WTC11 (cell line): ENCODE measurements at regions of chr11 and their contacts with region 1.

Region 1: DNA sequence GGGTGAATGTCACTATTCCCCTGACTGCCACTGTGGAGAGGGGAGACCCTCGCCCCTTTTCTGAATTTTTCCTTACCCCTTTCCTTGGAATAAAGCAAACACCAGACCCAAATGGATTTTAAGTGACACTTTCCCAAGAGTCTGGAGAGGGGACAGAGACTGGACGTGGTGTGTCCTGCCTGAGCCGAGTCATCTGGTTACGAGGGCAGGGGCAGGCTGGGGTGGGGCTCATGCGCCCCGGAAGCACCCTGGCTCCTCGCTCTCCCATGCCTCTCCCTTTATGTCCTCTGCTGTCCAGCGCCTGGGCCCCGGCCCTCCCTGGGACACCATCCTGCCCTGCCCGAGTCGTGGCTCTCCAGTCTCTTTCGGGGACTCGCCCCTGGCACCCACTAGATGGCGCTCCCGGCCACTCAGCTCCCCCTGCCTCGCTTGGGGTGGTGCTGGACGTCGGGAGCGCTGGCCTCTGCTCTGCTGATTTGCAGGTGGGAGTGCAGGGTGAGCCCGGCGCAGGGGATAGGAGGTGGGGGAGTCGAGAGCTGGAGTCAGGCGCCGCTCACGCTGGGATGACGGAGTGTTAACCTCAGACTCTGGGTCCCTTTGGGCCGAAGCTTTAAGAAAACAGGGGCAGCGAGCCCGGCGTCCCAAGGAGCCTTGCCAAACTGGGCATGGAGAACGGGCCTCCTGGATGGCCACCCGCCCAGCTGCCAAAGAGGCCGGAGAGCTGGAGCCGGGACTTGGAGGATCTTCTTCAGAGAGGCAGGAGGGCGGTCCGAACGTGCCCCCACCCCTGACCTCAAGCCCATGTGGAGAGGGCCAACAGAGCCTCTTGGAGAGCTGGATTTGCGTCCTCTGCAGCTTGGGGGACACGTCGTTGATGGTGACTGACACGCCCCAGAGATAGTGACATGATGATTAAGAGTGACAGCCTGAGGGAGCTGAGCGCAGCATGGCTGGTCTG is 89.9 kb downstream of the RPS6KA4 start:
- DNase-seq: peak; percentile 92
- ATAC-seq: peak; percentile 83
- H3K4me3 Mint-ChIP-seq: peak overlapping the region; percentile 76
- H3K27ac Mint-ChIP-seq: no peak overlapping the region
- H3K4me1 Mint-ChIP-seq: peaks cover 18% of the 10 kb centered on the region
- H3K27me3 Mint-ChIP-seq: peaks cover 68% of the 10 kb centered on the region
- CTCF ChIP-seq: peak; percentile 69

Region 2: GRCh38 chr11:64317957-64318693 is 130.8 kb before region 1 on chr11 and contains the start of gene PRDX5:
- CTCF ChIA-PET with region 1: interaction called, 18 read pairs
- POLR2A ChIA-PET with region 1: interaction called, 4 read pairs
- DNase-seq: peak; percentile 90
- ATAC-seq: peak; percentile 71
- H3K4me3 Mint-ChIP-seq: peak within 1 kb of the TSS; percentile 90
- H3K27ac Mint-ChIP-seq: peak within 1 kb of the TSS; percentile 99
- H3K4me1 Mint-ChIP-seq: peaks cover 17% of the 10 kb centered on the region
- H3K27me3 Mint-ChIP-seq: no peaks in the 10 kb centered on the region
- CTCF ChIP-seq: no peak
- total RNA-seq, gene PRDX5: 255 to 293 TPM (median 282 TPM) in 3 replicates

Region 3: GRCh38 chr11:64372802-64373597 is 75.9 kb before region 1 on chr11:
- CTCF ChIA-PET with region 1: interaction called, 27 read pairs
- POLR2A ChIA-PET with region 1: no interaction called
- DNase-seq: no peak
- ATAC-seq: peak; percentile 72
- H3K4me3 Mint-ChIP-seq: peak overlapping the region; percentile 10; the same call in 1 of the 2 replicates
- H3K27ac Mint-ChIP-seq: no peak overlapping the region
- H3K4me1 Mint-ChIP-seq: peaks cover 11% of the 10 kb centered on the region
- H3K27me3 Mint-ChIP-seq: no peaks in the 10 kb centered on the region
- CTCF ChIP-seq: no peak

Region 4: GRCh38 chr11:64428693-64429092 is 20.2 kb before region 1 on chr11:
- CTCF ChIA-PET with region 1: interaction called, 34 read pairs
- POLR2A ChIA-PET with region 1: no interaction called
- DNase-seq: no peak
- ATAC-seq: no peak
- H3K4me3 Mint-ChIP-seq: no peak overlapping the region
- H3K27ac Mint-ChIP-seq: no peak overlapping the region
- H3K4me1 Mint-ChIP-seq: no peaks in the 10 kb centered on the region
- H3K27me3 Mint-ChIP-seq: peaks cover 50% of the 10 kb centered on the region
- CTCF ChIP-seq: no peak

Region 5: DNA sequence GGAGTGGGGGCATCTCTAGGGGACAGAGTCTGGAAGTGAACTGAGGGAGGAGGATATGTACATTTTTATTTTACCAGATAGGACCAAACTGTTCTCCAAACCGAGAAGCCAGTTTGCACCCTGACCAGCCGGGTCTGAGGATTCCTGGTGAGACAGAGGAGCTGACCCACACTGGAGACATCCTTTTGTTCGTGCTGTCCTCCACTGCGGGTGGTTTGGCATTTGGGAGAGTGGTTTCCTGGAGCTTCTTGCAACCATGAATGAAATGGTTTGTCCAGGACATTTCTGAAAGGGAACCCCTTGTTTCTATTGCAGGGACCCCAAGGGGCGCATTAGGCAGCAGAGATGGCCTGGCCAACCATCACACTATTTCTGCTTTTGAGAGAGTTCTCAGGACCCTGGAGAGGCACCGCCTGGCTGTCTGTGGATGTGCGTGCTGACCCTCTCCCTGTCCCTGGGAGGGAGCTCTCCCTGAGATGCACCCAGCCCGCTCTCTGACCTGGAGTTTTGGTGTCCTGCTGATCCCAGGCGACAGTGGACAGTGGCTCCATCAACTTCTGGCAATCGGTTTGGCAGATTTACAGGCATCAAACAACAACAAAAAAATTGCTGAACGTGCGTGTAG is 61.8 kb after region 1 on chr11:
- CTCF ChIA-PET with region 1: interaction called, 19 read pairs
- POLR2A ChIA-PET with region 1: no interaction called
- DNase-seq: no peak
- ATAC-seq: no peak
- H3K4me3 Mint-ChIP-seq: no peak overlapping the region
- H3K27ac Mint-ChIP-seq: no peak overlapping the region
- H3K4me1 Mint-ChIP-seq: no peaks in the 10 kb centered on the region
- H3K27me3 Mint-ChIP-seq: peaks cover 60% of the 10 kb centered on the region
- CTCF ChIP-seq: no peak

Region 6: DNA sequence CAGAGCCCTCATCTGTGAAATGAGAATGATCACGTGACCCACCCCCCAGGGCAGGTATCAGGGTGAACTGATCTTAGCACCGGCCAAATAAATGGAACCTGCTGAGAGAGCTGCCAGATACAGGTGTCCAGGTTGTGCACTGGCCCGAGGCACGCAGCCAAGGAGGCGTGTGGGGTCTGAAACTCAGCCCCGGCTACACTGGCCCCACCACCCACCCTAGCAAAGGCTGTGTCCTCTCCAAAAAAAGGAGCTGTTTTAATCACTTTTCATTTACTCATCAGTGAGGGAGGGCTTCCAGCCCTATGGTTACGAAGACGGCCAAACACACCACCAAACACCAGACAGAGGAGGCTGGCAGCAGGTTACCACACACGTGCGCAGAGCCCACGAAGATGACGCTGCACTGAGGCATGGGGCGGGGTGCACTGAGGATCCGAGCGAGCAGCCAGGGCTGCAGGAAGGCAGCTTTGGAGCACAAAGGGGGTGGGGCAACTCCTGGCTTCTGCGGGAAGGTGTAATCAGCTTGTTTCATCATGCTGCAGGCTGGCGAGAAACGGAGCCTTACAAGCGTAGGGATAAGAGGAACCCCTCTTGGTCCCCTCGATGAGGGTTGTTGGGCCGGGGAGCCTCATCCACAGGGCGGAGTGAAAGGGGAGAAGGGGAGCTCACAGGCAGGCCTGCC is 122.7 kb after region 1 on chr11:
- CTCF ChIA-PET with region 1: interaction called, 33 read pairs
- POLR2A ChIA-PET with region 1: no interaction called
- DNase-seq: peak; percentile 53
- ATAC-seq: peak; percentile 63
- H3K4me3 Mint-ChIP-seq: no peak overlapping the region
- H3K27ac Mint-ChIP-seq: no peak overlapping the region
- H3K4me1 Mint-ChIP-seq: peaks cover 22% of the 10 kb centered on the region
- H3K27me3 Mint-ChIP-seq: peaks cover 19% of the 10 kb centered on the region
- CTCF ChIP-seq: no peak

Region 7: GRCh38 chr11:64688534-64688982 is 239.7 kb after region 1 on chr11:
- CTCF ChIA-PET with region 1: interaction called, 37 read pairs
- POLR2A ChIA-PET with region 1: no interaction called
- DNase-seq: peak; percentile 98
- ATAC-seq: peak; percentile 88
- H3K4me3 Mint-ChIP-seq: peak overlapping the region; percentile 87
- H3K27ac Mint-ChIP-seq: peak overlapping the region; percentile 39; the same call in 1 of the 2 replicates
- H3K4me1 Mint-ChIP-seq: peaks cover 27% of the 10 kb centered on the region
- H3K27me3 Mint-ChIP-seq: peaks cover 41% of the 10 kb centered on the region
- CTCF ChIP-seq: peak; percentile 93